HepG2 (cell line): ENCODE measurements at regions of chr4 and their contacts with region 1.

Region 1: DNA sequence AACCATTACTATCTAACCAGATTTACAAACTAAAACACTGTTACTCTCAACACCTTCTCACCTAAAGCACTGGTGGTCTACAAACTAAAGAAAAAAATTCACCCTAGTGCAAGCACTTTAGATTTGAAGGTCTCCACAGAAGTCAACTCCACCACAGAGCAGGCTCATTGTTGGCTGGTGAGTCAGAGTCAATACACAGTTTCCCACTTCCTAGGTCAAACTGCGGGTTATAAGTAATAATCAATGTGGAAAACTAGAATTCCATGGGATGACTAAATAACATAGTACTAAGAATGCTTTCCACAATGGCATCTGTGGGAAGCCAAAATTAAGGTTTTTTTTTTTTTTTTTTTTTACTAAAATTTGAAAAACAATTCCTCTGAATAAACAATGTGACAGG is 191.8 kb downstream of the PDGFC start:
- DNase-seq: peak; percentile 86
- ATAC-seq: peak; percentile 95
- H3K4me3 ChIP-seq: no peak overlapping the region
- H3K27ac ChIP-seq: peak overlapping the region; percentile 48
- H3K4me1 ChIP-seq: peaks cover 22% of the 10 kb centered on the region
- H3K27me3 ChIP-seq: no peaks in the 10 kb centered on the region
- CTCF ChIP-seq: no peak
- EP300 ChIP-seq: peak in 1 of 2 experiments; percentile 57; a peak in 1 of 4 replicates
- POLR2A ChIP-seq: no peak
- RAD21 ChIP-seq: no peak

Region 2: GRCh38 chr4:156190615-156191014 is 589.2 kb before region 1 on chr4:
- CTCF ChIA-PET with region 1: no interaction called
- POLR2A ChIA-PET with region 1: no interaction called
- in situ Hi-C with region 1: no loop called
- intact Hi-C with region 1: no loop called
- DNase-seq: no peak
- ATAC-seq: no peak
- H3K4me3 ChIP-seq: no peak overlapping the region
- H3K27ac ChIP-seq: no peak overlapping the region
- H3K4me1 ChIP-seq: peaks cover 26% of the 10 kb centered on the region
- H3K27me3 ChIP-seq: no peaks in the 10 kb centered on the region
- CTCF ChIP-seq: no peak
- EP300 ChIP-seq: no peak
- POLR2A ChIP-seq: no peak
- RAD21 ChIP-seq: no peak

Region 3: GRCh38 chr4:156420623-156421022 is 359.2 kb before region 1 on chr4:
- CTCF ChIA-PET with region 1: no interaction called
- POLR2A ChIA-PET with region 1: no interaction called
- in situ Hi-C with region 1: no loop called
- intact Hi-C with region 1: no loop called
- DNase-seq: no peak
- ATAC-seq: no peak
- H3K4me3 ChIP-seq: no peak overlapping the region
- H3K27ac ChIP-seq: no peak overlapping the region
- H3K4me1 ChIP-seq: no peaks in the 10 kb centered on the region
- H3K27me3 ChIP-seq: no peaks in the 10 kb centered on the region
- CTCF ChIP-seq: no peak
- EP300 ChIP-seq: no peak
- POLR2A ChIP-seq: no peak
- RAD21 ChIP-seq: no peak

Region 4: DNA sequence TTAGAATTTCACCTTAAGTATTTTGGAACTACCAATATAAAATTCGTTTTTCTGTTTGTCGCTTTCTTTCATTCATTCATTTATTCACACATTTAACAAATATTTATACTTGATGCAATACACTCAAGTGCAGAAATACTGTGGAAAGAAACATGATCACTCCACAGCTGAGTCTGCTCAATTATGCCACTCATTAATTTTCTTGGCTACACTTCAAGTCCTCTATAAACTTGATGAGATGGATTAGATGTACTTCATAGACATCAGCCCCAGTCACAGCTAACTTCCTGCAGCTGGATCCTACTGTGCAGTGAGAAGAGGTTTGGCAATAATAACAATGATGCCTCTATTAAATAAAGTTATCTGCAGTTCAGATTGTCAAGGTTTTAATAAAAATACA is 16.3 kb before region 1 on chr4:
- CTCF ChIA-PET with region 1: no interaction called
- POLR2A ChIA-PET with region 1: no interaction called
- in situ Hi-C with region 1: no loop called
- intact Hi-C with region 1: loop called (anchors 2 kb)
- DNase-seq: no peak
- ATAC-seq: no peak
- H3K4me3 ChIP-seq: no peak overlapping the region
- H3K27ac ChIP-seq: no peak overlapping the region
- H3K4me1 ChIP-seq: peaks cover 23% of the 10 kb centered on the region
- H3K27me3 ChIP-seq: no peaks in the 10 kb centered on the region
- CTCF ChIP-seq: no peak
- EP300 ChIP-seq: no peak
- POLR2A ChIP-seq: no peak
- RAD21 ChIP-seq: no peak